ENCODE measurements at regions of chr1 and their contacts with region 1.

Region 1: DNA sequence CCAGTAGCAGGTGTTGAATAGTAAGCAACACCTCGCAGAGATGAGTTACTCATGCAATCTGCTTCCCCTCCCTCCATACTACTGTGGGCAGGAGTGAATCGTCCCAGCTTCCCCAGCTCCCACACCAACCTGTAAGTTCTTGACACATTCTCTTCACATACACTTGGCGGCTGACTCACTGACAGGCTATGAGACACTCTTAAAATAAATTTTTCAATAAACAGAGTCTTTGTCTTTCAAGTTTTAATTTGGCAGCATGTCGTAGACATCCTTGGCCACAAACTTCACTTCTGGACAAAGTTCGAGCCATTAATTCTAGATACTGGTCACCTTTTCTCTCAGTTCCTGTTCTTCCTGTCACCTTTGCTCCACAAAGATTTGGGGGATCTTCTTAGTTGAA is 290.7 kb downstream of the TM2D1 start:
- DNase-seq: no peak
- H3K4me3 ChIP-seq: no peak overlapping the region
- H3K27ac ChIP-seq: no peak overlapping the region
- H3K4me1 ChIP-seq: no peaks in the 10 kb centered on the region
- H3K27me3 ChIP-seq: no peaks in the 10 kb centered on the region
- CTCF ChIP-seq: no peak
- EP300 ChIP-seq: no peak
- POLR2A ChIP-seq: no peak

Region 2: GRCh38 chr1:61388566-61388965 is 45.7 kb before region 1 on chr1:
- in situ Hi-C with region 1: loop called in 1 of 4 experiments (anchors 5 kb)
- intact Hi-C with region 1: no loop called
- DNase-seq: no peak
- H3K4me3 ChIP-seq: no peak overlapping the region
- H3K27ac ChIP-seq: no peak overlapping the region
- H3K4me1 ChIP-seq: peaks cover 0 to 28% (median 5%) of the 10 kb centered on the region in 4 donors
- H3K27me3 ChIP-seq: no peaks in the 10 kb centered on the region
- CTCF ChIP-seq: no peak
- EP300 ChIP-seq: no peak
- POLR2A ChIP-seq: no peak

Measured in transverse colon (tissue), 4 donors.